K562 (cell line): ENCODE measurements at regions of chr15 and their contacts with region 1.

Region 1: DNA sequence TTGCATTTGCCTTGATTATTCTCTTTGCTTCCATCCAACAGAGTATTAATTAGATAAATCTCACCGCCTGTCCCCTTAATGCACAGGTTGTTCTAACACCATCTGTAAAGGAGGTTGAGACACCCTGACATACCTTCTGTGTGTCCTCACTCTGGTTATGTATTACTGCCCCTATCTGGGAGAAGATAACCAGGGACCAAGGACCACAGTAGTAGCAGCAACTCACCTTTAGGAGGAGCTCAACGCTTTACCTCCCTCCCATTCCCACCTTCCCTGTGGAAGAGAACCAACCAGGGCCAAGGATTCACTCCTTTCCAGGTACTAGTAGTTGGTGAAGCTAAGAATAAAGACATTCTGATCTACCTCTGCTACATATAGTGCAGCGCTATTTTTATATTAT is 232.6 kb downstream of the MEX3B start:
- DNase-seq: peak; percentile 14 to 46 (median 26)
- ATAC-seq: peak; percentile 87
- H3K4me3 ChIP-seq: no peak overlapping the region
- H3K27ac ChIP-seq: no peak overlapping the region
- H3K4me1 ChIP-seq: no peaks in the 10 kb centered on the region
- H3K27me3 ChIP-seq: no peaks in the 10 kb centered on the region
- CTCF ChIP-seq: peak; percentile 55 to 83 (median 73)
- EP300 ChIP-seq: no peak
- POLR2A ChIP-seq: no peak
- RAD21 ChIP-seq: peak; percentile 52 to 82

Region 2: DNA sequence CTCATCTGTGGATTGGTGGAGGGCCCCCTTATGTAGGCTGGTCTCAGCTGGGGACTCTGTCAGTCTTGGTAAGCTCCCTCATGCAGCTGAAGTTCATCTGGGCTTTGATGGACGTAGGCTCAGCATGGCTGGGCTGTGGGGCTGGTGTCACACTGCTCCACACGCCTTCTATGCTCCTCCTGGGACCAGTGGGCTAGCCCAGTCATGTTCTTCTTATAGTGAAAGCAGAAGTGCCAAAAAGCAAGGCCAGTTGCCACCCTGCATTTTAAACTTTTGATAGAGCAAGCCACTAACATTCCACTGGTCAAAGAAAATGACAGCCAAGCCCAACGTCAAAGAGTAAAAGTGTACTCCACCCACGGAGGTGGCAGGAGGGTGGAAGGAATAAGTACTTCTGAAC is 67.1 kb after region 1 on chr15:
- CTCF ChIA-PET with region 1: no interaction called
- POLR2A ChIA-PET with region 1: no interaction called
- in situ Hi-C with region 1: no loop called
- intact Hi-C with region 1: no loop called
- DNase-seq: no peak
- ATAC-seq: no peak
- H3K4me3 ChIP-seq: no peak overlapping the region
- H3K27ac ChIP-seq: no peak overlapping the region
- H3K4me1 ChIP-seq: no peaks in the 10 kb centered on the region; a peak in 2 of 5 replicates
- H3K27me3 ChIP-seq: no peaks in the 10 kb centered on the region
- CTCF ChIP-seq: no peak
- EP300 ChIP-seq: no peak
- POLR2A ChIP-seq: no peak
- RAD21 ChIP-seq: no peak

Region 3: DNA sequence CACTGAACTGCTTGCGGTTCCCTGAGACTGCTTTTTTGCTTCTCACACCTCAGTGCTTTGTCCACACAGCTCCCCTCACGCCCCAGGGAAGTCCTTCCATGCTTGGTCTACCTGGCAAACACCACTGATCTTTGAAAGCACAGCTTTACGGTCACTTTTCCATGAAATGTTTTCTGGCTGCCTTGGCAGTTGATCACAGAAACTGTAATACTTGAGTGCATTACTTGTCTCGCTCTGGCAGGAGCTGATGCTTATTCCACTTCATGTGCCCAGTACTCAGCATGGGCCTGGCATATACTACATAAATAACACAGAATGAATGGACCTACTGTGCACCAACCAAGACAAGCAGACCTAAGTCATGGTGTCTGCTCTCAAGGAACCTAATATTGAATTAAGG is 111.6 kb after region 1 on chr15:
- CTCF ChIA-PET with region 1: no interaction called
- POLR2A ChIA-PET with region 1: no interaction called
- in situ Hi-C with region 1: no loop called
- intact Hi-C with region 1: no loop called
- DNase-seq: no peak
- ATAC-seq: no peak
- H3K4me3 ChIP-seq: no peak overlapping the region
- H3K27ac ChIP-seq: no peak overlapping the region
- H3K4me1 ChIP-seq: no peaks in the 10 kb centered on the region
- H3K27me3 ChIP-seq: no peaks in the 10 kb centered on the region
- CTCF ChIP-seq: no peak
- EP300 ChIP-seq: no peak
- POLR2A ChIP-seq: no peak
- RAD21 ChIP-seq: no peak

Region 4: GRCh38 chr15:82046666-82047452 is 233.7 kb after region 1 on chr15:
- CTCF ChIA-PET with region 1: no interaction called
- POLR2A ChIA-PET with region 1: no interaction called
- in situ Hi-C with region 1: no loop called
- intact Hi-C with region 1: loop called (anchors 5 kb)
- DNase-seq: peak; percentile 94 to 98 (median 97)
- ATAC-seq: peak; percentile 85
- H3K4me3 ChIP-seq: peak overlapping the region; percentile 86
- H3K27ac ChIP-seq: peak overlapping the region; percentile 96
- H3K4me1 ChIP-seq: peaks cover 2 to 44% of the 10 kb centered on the region in 2 experiments; a peak in 4 of 5 replicates
- H3K27me3 ChIP-seq: no peaks in the 10 kb centered on the region
- CTCF ChIP-seq: peak; percentile 66 to 80 (median 80)
- EP300 ChIP-seq: no peak; the same call in 1 of the 2 replicates
- POLR2A ChIP-seq: peak; percentile 75; the same call in 1 of the 2 replicates
- RAD21 ChIP-seq: peak; percentile 89 to 93